ENCODE measurements at regions of chr6 and their contacts with region 1.

Region 1: DNA sequence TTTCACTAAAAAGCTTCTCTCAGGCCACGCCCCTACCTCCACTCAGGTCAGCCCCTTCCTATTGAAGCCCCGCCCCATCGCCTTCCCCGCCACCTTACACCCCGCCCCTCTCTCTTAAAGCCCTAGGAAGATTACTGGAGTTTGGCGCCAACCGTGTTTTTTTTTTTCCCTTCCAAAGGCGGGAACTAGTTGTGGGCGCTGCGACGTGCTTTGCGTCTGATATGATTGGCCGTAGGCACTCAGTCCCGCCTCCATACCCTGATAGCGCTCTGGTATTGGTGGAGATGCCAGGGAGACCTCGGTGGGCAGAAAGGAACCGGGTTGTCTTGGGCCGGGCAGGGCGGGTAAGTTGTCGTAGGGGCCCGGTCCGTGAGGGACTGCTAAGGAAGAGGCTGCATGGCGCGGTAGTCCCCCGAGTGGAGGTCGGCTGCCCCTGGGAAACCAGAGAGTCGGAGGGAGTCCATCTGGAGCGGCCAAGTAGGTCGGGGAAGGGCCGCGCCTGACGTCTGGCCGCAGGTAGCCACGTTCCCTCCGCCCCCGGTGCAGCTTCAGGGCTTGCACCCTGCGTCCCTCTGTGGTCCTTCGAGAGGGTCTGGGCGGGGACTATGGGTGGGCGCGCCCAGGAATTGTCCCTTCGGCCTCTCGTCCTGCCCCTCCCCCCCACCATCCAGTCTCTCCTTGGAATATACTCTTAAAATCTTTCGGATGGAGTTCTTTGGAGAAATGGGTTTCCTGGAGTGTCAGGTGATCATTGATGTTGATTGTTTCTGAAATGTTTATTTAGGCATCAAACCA is at the start of gene CASP8AP2:
- H3K4me3 Mint-ChIP-seq: peak within 1 kb of the TSS; percentile 93
- H3K27ac Mint-ChIP-seq: peak within 1 kb of the TSS; percentile 92
- H3K4me1 Mint-ChIP-seq: peaks cover 20% of the 10 kb centered on the region
- H3K27me3 Mint-ChIP-seq: no peaks in the 10 kb centered on the region

Region 2: DNA sequence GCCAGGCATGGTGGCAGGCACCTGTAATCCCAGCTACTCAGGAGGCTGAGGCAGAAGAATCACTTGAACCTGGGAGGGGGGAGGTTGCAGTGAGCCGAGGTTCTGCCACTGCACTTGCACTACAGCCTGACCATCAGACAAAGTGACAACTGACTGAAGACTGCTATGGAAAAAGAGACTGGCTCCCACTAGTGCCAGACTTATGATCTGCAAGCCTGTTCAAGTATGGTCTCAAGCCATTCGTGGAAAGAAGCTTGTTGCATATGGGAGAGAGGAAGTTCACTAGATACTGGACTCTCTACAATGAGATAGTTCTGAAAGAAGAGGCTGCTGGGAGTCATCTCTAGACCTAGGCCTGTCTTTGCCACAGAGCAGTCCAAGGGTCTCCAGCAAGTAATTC is 36.9 kb before region 1 on chr6:
- intact Hi-C with region 1: no loop called
- H3K4me3 Mint-ChIP-seq: no peak overlapping the region
- H3K27ac Mint-ChIP-seq: no peak overlapping the region
- H3K4me1 Mint-ChIP-seq: peaks cover 14% of the 10 kb centered on the region
- H3K27me3 Mint-ChIP-seq: no peaks in the 10 kb centered on the region

Region 3: DNA sequence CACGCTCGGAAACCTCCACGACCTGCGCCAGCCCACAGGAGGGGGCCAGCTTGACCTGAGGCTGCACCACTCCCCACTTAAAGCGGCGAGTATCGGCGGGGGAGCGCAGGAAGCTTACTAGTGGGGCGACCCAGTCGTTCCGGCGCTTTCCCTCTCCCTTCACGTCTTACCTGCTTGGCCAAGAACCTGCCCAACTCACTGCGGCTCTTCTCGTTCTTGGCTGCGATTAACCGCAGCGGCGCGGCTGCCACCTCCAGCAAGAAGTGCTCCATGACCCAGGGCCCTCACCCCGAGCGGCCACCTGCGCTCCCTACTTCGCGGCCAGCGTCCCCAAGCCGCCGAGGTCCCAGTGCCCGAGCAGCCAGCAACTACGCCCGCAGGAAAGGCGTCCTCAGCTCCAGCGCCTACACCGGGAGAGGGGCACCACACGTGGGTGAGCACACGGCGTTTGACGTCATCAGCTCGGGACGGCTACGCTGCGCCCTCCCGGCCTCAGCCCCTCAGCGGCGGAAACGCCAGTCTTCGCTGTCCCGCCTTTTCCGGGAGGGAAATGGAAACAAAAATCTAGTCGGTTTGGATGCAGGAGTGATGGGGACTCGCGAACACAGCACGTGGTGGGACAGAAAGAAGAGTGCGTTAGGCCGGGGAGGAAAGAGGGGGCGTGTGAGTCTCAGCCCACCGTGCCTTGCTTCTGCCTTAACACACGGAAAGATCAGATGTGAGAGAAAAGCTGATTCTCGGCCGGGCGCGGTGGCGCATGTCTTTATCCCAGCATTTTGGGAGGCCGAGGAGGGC is 10.3 kb before region 1 on chr6 and contains the start of gene MDN1:
- intact Hi-C with region 1: loop called (anchors 1 kb)
- H3K4me3 Mint-ChIP-seq: peak within 1 kb of the TSS; percentile 89
- H3K27ac Mint-ChIP-seq: peak within 1 kb of the TSS; percentile 90
- H3K4me1 Mint-ChIP-seq: peaks cover 33% of the 10 kb centered on the region
- H3K27me3 Mint-ChIP-seq: no peaks in the 10 kb centered on the region

Region 4: DNA sequence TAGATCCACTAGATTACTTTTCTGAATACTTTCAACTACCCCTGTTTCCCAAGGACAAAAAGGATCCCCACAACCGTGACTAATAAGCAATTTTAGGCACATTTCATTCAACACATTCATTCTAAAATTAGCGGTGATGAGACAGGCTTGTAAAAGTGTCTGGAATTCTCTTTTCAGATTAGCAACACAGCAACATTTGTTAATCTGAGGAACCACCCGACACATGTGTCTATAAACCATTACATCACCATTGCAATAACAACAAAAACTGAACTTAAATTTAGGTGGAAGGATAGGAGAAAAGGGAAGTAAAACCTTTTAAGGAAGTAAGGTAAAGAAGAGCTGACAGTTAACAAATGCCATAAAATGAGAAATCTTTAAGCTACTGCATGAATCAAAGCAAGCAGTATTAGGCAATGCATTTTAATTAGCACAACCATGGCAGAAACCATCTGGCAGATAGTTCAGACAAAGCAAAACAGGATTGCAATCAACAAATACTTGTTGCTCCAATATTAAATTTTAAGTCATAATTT is 708.0 kb after region 1 on chr6:
- intact Hi-C with region 1: loop called (anchors 5 kb)
- H3K4me3 Mint-ChIP-seq: peak overlapping the region; percentile 17
- H3K27ac Mint-ChIP-seq: peak overlapping the region; percentile 49
- H3K4me1 Mint-ChIP-seq: peaks cover 12% of the 10 kb centered on the region
- H3K27me3 Mint-ChIP-seq: no peaks in the 10 kb centered on the region

Region 5: DNA sequence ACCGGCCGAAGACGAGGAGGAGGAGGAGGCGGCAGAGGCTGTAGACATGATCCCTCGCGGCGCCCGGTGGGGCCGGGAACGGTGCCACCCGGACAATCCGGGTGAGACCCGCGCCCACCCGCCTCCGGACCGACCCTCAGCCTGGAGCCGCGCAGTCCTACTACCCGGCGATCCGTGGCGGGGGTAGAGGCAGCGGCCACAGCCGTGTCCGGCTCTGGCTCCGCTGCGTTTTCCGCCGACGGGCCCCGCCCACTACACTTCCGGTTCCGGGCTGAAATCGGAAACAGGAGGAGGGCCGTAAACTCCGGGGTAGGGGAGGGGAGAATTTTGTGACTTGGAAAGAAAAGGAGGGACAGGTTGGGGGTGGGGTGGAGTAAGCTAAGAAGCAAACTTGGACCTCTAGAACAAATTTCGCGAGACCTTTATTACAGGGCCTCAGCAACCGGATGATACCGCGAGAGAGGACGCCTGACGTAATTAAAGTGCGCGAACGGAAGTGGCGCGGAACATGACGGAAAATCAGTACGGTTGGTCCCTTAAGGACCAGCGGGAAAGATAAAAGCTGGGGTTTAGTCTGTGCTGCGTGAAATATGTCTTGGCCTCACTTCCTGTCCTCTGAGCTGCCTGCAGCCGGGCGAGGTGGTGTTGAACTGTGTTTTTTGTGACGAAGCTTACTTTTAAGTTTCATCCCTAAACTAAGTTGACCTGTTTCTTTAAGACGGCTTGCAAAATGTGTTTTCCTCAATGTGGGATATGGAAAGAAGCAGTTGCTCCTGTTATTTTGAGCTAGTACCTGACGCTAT is 757.2 kb after region 1 on chr6 and contains the start of gene MAP3K7:
- intact Hi-C with region 1: loop called (anchors 5 kb)
- H3K4me3 Mint-ChIP-seq: peak within 1 kb of the TSS; percentile 90
- H3K27ac Mint-ChIP-seq: peak within 1 kb of the TSS; percentile 98
- H3K4me1 Mint-ChIP-seq: peaks cover 22% of the 10 kb centered on the region
- H3K27me3 Mint-ChIP-seq: peaks cover 15% of the 10 kb centered on the region